ENCODE measurements at regions of chr19 and their contacts with region 1.

Region 1: DNA sequence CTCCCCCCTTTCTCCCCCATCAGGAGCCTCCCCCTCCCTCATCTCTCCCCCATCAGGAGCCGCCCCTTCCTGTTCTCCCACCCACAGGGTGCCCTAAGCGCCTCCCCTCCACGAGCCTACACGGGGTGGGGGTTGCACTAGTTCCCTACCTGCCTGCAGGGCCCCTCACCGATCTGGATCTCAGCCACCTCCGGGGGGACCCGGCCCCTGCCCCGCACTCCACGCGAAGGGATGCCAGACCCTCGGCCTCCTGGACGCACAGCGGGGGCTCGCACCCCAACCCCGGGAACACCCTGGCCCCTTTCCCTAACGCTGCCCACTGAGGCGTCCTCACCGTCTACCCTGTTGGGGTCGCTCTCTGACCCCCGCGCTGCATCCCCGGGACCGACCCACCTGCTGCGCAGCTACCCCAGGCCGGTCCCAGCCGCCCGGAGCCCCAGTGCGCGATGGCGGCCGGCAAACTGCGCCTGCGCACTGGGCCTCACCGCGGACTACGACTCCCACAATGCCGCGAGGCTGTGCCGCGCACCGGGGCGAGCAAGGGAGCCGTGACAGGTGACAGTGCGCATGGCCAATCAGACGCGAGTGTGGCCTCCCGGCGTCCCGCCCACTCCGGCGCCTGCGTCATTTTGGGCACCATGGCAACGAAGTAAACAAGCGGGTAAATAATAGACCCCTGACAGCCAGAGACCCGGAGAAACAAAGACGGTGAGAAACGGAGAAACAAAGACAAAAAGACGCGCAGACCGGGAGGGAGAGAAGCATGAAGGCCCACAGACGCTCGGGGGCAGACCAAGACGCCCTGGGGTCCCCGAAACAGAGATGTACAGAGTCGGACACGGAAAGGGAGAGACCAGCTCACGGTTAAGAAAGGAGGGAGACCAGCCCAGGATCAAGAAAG is at the start of gene ZSCAN18:
- DNase-seq: peak; percentile 77 to 100 (median 99)
- ATAC-seq: peak; percentile 97
- H3K4me3 ChIP-seq: peak within 1 kb of the TSS; percentile 86
- H3K4me3 Mint-ChIP-seq: peak within 1 kb of the TSS; percentile 83 to 100 (median 91)
- H3K27ac ChIP-seq: peak within 1 kb of the TSS; percentile 100
- H3K27ac Mint-ChIP-seq: peak within 1 kb of the TSS; percentile 98 to 100 (median 100)
- H3K4me1 ChIP-seq: peaks cover 0 to 11% of the 10 kb centered on the region in 2 donors
- H3K4me1 Mint-ChIP-seq: peaks cover 8 to 18% (median 15%) of the 10 kb centered on the region in 7 donors
- H3K27me3 ChIP-seq: no peaks in the 10 kb centered on the region
- H3K27me3 Mint-ChIP-seq: no peaks in the 10 kb centered on the region
- total RNA-seq, gene ZSCAN18: 8.2 to 100 (median 78.1) TPM

Region 2: DNA sequence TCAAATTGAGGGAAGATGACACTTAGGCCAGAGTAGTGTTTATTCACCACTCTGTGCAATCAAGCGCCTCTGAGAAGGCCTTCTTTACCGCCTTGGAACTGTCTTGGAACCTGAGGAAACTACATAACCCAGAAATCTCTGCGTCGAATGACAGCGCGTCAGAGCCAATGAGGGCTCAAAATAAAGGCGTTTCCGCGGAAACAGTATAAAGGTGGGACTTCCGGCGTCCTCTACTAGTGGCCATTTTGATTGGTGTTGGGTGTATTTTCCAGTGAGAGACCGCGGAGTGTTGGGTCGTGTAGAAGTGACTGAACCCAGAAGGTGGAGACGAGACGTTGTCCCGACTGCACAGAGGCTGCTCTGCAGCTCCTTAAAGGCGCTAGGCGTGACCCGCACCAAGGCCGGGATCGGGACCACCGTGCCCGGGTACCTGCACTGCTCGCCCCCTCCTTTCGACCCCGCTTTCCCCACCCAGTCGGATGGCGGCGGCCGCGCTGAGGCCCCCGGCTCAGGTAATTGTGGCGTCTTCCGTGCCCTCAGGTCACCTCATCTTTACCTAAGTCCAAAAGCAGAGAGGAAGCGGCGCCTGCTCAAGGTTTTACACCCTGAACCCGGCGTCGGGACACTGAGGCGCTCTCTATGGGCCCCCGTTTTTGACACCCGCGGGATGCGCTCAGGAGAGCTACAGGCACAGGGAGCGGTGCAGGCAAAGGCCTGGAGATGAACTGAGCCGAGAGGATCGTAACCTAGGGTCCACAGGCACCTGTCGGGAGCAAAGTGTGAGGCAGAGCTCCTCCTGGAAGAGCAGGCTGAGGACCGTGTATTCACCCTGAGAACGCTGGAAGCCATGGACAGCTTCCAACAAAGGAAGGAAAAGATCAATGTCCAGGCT is 351.2 kb before region 1 on chr19 and contains the start of gene ZNF776:
- CTCF ChIA-PET with region 1: no interaction called
- POLR2A ChIA-PET with region 1: no interaction called
- intact Hi-C with region 1: loop called in 1 of 2 experiments (anchors 1 kb)
- DNase-seq: peak; percentile 40 to 90 (median 84)
- ATAC-seq: peak; percentile 99
- H3K4me3 ChIP-seq: peak within 1 kb of the TSS; percentile 86
- H3K4me3 Mint-ChIP-seq: peak within 1 kb of the TSS; percentile 91 to 99 (median 94)
- H3K27ac ChIP-seq: peak within 1 kb of the TSS; percentile 85
- H3K27ac Mint-ChIP-seq: peak within 1 kb of the TSS; percentile 81 to 99 (median 94)
- H3K4me1 ChIP-seq: peaks cover 6 to 16% of the 10 kb centered on the region in 2 donors
- H3K4me1 Mint-ChIP-seq: peaks cover 13 to 40% (median 26%) of the 10 kb centered on the region in 7 donors
- H3K27me3 ChIP-seq: no peaks in the 10 kb centered on the region
- H3K27me3 Mint-ChIP-seq: no peaks in the 10 kb centered on the region
- total RNA-seq, gene ZNF776: 18.9 to 52.3 (median 21.8) TPM

Region 3: GRCh38 chr19:58059003-58059670 is 38.9 kb before region 1 on chr19 and contains the start of gene ZNF135:
- CTCF ChIA-PET with region 1: no interaction called
- POLR2A ChIA-PET with region 1: no interaction called
- intact Hi-C with region 1: no loop called
- DNase-seq: peak in 8 of 9 donors; percentile 34 to 77 (median 57)
- ATAC-seq: peak; percentile 91
- H3K4me3 ChIP-seq: peak within 1 kb of the TSS; percentile 39
- H3K4me3 Mint-ChIP-seq: peak within 1 kb of the TSS; percentile 33 to 91 (median 84)
- H3K27ac ChIP-seq: peak within 1 kb of the TSS; percentile 73
- H3K27ac Mint-ChIP-seq: peak within 1 kb of the TSS in 6 of 9 donors; percentile 68 to 88 (median 82)
- H3K4me1 ChIP-seq: no peaks in the 10 kb centered on the region
- H3K4me1 Mint-ChIP-seq: peaks cover 0 to 12% (median 6%) of the 10 kb centered on the region in 7 donors
- H3K27me3 ChIP-seq: no peaks in the 10 kb centered on the region
- H3K27me3 Mint-ChIP-seq: peaks cover 2 to 29% (median 19%) of the 10 kb centered on the region in 5 donors
- total RNA-seq, gene ZNF135: 0.07 to 2.9 (median 2.5) TPM

Region 4: DNA sequence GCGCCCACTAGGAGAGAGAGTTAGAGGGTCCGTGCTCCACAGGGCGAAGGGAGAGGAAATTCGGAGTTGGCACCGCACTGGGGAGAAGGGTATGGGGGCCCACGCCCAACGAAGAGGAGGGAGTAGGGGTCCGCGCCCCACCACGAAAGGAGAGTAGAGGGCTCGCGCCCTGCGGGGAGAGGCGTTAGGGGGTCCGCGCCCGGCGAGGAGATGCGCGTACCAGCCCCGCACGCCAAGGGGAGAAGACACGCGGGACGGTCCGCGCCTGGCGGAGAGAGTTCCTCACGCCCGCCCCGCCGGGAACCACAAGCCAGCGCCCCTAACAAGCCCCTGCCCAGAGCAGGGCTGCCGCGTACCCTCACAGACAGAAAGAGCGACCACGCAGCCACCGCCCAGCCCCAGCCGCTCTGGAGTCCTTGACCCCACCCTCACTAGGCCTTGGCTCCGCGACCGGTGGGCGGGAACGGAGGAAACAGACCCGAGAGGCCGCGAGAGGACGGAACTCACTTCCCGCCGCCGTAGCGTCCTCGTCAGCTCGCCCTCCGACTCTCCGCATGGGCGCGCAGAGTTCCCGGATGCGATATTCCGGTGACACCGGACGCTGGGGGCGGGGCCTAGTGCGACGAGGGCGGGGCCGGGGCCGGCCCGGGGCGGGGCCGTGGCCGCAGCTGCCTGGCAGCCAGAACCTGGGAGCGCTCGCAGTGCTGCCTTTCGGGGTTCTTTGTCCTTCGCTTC is 20.0 kb after region 1 on chr19:
- CTCF ChIA-PET with region 1: no interaction called
- POLR2A ChIA-PET with region 1: no interaction called
- intact Hi-C with region 1: no loop called
- DNase-seq: no peak
- ATAC-seq: no peak
- H3K4me3 ChIP-seq: no peak overlapping the region
- H3K4me3 Mint-ChIP-seq: peak overlapping the region in 2 of 10 donors; percentile 36 to 72
- H3K27ac ChIP-seq: no peak overlapping the region
- H3K27ac Mint-ChIP-seq: peak overlapping the region in 2 of 9 donors; percentile 18 to 20
- H3K4me1 ChIP-seq: no peaks in the 10 kb centered on the region
- H3K4me1 Mint-ChIP-seq: peaks cover 0 to 8% (median 0%) of the 10 kb centered on the region in 7 donors
- H3K27me3 ChIP-seq: no peaks in the 10 kb centered on the region
- H3K27me3 Mint-ChIP-seq: peaks cover 0 to 40% (median 18%) of the 10 kb centered on the region in 5 donors

Measured in naive thymus-derived CD4-positive, alpha-beta T cell (primary cell).